ENCODE measurements at regions of chr4 and their contacts with region 1.

Region 1: GRCh38 chr4:185865901-185866328 is 53.9 kb upstream of the SORBS2 start:
- DNase-seq: peak; percentile 67 to 90
- H3K4me3 ChIP-seq: peak overlapping the region; percentile 1; the same call in 1 of the 2 replicates
- H3K27ac ChIP-seq: peak overlapping the region; percentile 96
- H3K4me1 ChIP-seq: peaks cover 34% of the 10 kb centered on the region
- H3K27me3 ChIP-seq: no peaks in the 10 kb centered on the region
- CTCF ChIP-seq: no peak

Region 2: GRCh38 chr4:185847352-185848107 is 18.4 kb before region 1 on chr4:
- CTCF ChIA-PET with region 1: no interaction called
- POLR2A ChIA-PET with region 1: no interaction called
- intact Hi-C with region 1: loop called (anchors 1 kb)
- DNase-seq: peak in 1 of 2 experiments; percentile 60
- H3K4me3 ChIP-seq: no peak overlapping the region
- H3K27ac ChIP-seq: no peak overlapping the region
- H3K4me1 ChIP-seq: no peaks in the 10 kb centered on the region
- H3K27me3 ChIP-seq: no peaks in the 10 kb centered on the region
- CTCF ChIP-seq: no peak

Region 3: GRCh38 chr4:185965426-185966384 is 99.8 kb after region 1 on chr4:
- CTCF ChIA-PET with region 1: no interaction called
- POLR2A ChIA-PET with region 1: no interaction called
- intact Hi-C with region 1: loop called (anchors 1 kb)
- DNase-seq: peak in 1 of 2 experiments; percentile 21
- H3K4me3 ChIP-seq: no peak overlapping the region
- H3K27ac ChIP-seq: peak overlapping the region; percentile 78; the same call in 1 of the 2 replicates
- H3K4me1 ChIP-seq: peaks cover 25% of the 10 kb centered on the region
- H3K27me3 ChIP-seq: no peaks in the 10 kb centered on the region
- CTCF ChIP-seq: no peak